PC-9 (cell line): ENCODE measurements at regions of chr2 and their contacts with region 1.

Region 1: DNA sequence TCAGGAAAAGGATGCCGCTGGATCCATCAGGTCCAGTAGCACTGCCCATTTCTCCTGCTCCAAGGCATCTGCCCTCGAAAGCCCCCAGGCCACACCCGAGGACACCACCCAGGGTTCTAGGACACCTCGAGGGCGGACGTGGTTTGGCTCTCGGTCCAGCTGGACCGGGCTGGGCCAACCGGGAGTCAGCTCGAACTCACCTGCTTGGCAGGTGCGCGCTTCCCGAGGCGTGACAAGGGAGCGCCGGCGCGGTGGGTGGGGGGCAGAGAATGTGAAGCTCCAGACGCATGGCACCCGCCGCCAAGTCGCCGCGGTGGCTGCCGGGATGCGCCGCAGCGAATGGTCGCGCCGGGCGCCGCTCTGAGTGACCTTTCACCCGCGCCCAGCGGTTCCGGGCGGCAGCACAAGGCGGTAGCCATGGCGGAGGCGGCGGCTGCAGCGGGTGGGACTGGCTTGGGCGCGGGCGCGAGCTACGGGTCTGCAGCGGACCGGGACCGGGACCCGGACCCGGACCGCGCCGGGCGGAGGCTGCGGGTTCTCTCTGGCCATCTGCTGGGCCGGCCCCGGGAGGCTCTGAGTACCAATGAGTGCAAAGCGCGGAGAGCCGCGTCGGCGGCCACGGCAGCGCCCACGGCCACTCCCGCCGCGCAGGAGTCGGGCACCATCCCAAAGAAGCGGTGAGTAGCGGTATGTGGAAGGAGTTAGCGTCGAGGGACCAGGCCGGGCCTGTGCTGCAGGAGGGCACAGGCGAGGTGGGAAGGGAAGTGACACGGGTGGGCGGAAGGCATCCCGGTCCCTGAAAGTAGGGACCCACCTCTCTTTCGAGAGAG is at the start of gene AGPS:
- DNase-seq: peak; percentile 76 to 91
- H3K4me3 ChIP-seq: peak within 1 kb of the TSS; percentile 94
- H3K27ac ChIP-seq: peak within 1 kb of the TSS; percentile 62
- H3K4me1 ChIP-seq: peaks cover 54% of the 10 kb centered on the region
- H3K27me3 ChIP-seq: no peaks in the 10 kb centered on the region
- CTCF ChIP-seq: no peak
- total RNA-seq, gene AGPS: 101 and 107 TPM in 2 replicates

Region 2: DNA sequence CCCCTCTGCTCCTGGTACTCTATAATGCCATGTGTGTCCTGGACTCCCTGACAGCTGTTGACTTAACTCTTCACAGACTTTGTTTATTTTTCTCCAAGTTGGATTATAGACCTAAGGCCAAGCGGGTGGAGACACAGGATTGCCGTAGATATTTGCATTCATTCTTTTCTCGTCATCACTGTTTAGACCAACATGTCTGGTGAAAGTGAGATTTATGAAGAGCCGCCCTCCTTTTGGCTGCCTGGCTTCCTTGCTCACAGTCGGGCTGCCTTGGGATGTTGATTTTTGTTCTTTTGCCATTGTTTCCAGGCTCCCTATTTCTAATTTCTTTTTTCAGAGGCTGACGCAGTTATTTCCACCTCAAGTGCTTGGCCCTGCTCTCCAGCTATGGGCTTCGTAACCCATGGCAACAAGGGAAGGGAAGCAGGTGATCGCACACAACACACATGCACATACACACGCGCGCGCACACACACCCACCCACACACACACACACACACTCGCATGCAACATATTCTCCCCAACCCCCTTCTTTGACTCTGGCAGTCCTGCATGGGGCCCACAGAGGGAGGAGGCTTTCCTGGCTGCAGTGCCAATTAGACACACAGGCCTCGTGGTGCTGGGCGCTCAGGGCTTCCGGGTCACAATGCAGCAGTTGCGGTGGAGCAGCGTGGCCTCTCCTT is 826.8 kb before region 1 on chr2:
- CTCF ChIA-PET with region 1: no interaction called
- POLR2A ChIA-PET with region 1: no interaction called
- intact Hi-C with region 1: loop called (anchors 10 kb)
- DNase-seq: no peak
- H3K4me3 ChIP-seq: no peak overlapping the region
- H3K27ac ChIP-seq: no peak overlapping the region
- H3K4me1 ChIP-seq: peaks cover 23% of the 10 kb centered on the region
- H3K27me3 ChIP-seq: no peaks in the 10 kb centered on the region
- CTCF ChIP-seq: no peak

Region 3: DNA sequence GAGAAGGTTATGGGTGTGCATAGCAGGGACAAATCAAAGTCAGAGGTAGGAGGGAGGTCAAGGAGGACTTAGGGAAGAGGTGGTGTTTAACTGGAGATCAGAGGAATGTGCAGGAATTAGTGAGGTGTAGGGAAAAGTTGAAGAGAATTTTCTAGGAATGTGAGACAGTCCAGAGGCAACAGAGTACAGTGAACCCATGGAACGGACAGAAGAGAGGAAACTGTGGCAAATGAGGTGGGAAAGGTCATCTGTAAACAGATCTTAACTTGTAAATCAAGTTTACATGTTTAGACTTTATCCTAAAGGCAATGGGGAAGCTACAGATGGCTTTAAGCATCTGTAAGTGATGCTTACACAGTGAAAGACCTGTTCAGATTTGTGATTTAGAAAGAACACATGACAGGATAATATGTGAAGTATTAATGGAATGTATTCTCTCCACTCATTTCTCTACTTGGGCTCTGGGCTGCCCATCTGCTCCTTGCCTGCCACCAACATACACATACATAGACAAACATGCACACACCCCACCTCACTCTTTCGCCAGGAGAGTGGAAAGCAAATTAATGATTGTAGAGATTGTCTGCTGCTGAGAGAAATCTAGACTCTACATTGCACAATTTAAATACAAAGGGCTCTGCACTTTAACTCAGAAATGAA is 67.2 kb before region 1 on chr2:
- CTCF ChIA-PET with region 1: no interaction called
- POLR2A ChIA-PET with region 1: no interaction called
- intact Hi-C with region 1: no loop called
- DNase-seq: peak in 1 of 2 experiments; percentile 12
- H3K4me3 ChIP-seq: no peak overlapping the region
- H3K27ac ChIP-seq: no peak overlapping the region
- H3K4me1 ChIP-seq: peaks cover 8% of the 10 kb centered on the region
- H3K27me3 ChIP-seq: no peaks in the 10 kb centered on the region
- CTCF ChIP-seq: no peak